ENCODE measurements at regions of chr15 and their contacts with region 1.

Region 1: GRCh38 chr15:99507504-99508310 is 58.1 kb upstream of the MEF2A start:
- DNase-seq: no peak
- ATAC-seq: peak; percentile 49
- H3K4me3 ChIP-seq: no peak overlapping the region; the same call in 1 of the 2 replicates
- H3K27ac ChIP-seq: peak overlapping the region; percentile 74
- H3K4me1 ChIP-seq: peaks cover 88% of the 10 kb centered on the region
- H3K27me3 ChIP-seq: no peaks in the 10 kb centered on the region
- CTCF ChIP-seq: no peak
- EP300 ChIP-seq: peak in 1 of 2 experiments; percentile 59; a peak in 2 of 4 replicates
- POLR2A ChIP-seq: peak; percentile 63
- RAD21 ChIP-seq: no peak

Region 2: GRCh38 chr15:98753726-98754671 is 753.7 kb before region 1 on chr15:
- CTCF ChIA-PET with region 1: no interaction called
- POLR2A ChIA-PET with region 1: no interaction called
- RAD21 ChIA-PET with region 1: no interaction called
- SMC1A ChIA-PET with region 1: no interaction called
- in situ Hi-C with region 1: no loop called
- intact Hi-C with region 1: no loop called
- DNase-seq: no peak
- ATAC-seq: no peak
- H3K4me3 ChIP-seq: no peak overlapping the region
- H3K27ac ChIP-seq: no peak overlapping the region
- H3K4me1 ChIP-seq: no peaks in the 10 kb centered on the region
- H3K27me3 ChIP-seq: no peaks in the 10 kb centered on the region
- CTCF ChIP-seq: no peak
- EP300 ChIP-seq: no peak
- POLR2A ChIP-seq: no peak
- RAD21 ChIP-seq: no peak

Region 3: GRCh38 chr15:99282121-99282520 is 225.6 kb before region 1 on chr15:
- CTCF ChIA-PET with region 1: interaction called, 9 read pairs
- POLR2A ChIA-PET with region 1: no interaction called
- RAD21 ChIA-PET with region 1: interaction called, 9 read pairs
- SMC1A ChIA-PET with region 1: interaction called, 9 read pairs
- in situ Hi-C with region 1: no loop called
- intact Hi-C with region 1: loop called (anchors 1 kb)
- DNase-seq: no peak
- ATAC-seq: no peak; the same call in 1 of the 3 replicates
- H3K4me3 ChIP-seq: no peak overlapping the region
- H3K27ac ChIP-seq: no peak overlapping the region
- H3K4me1 ChIP-seq: no peaks in the 10 kb centered on the region
- H3K27me3 ChIP-seq: no peaks in the 10 kb centered on the region
- CTCF ChIP-seq: no peak
- EP300 ChIP-seq: no peak
- POLR2A ChIP-seq: no peak
- RAD21 ChIP-seq: no peak

Region 4: DNA sequence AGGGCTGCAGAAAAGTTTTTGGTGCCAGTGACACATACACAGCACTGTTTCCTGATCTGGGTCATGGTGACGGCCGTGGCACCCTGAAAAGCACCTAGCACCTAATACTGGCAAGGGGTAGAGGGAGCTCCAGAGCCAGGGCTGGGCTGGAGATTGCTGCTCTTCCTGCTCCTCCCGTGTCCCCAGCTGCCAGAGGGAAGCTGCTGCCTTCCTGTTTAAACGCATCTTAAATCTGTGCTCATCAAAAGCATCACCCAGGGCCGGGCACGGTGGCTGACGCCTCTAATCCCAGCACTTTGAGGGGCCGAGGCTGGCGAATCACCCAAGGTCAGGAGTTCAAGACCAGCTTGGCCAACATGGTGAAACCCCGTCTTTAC is 98.6 kb before region 1 on chr15:
- CTCF ChIA-PET with region 1: interaction called, 7 read pairs
- POLR2A ChIA-PET with region 1: no interaction called
- RAD21 ChIA-PET with region 1: interaction called, 13 read pairs
- SMC1A ChIA-PET with region 1: interaction called, 3 read pairs
- in situ Hi-C with region 1: no loop called
- intact Hi-C with region 1: no loop called
- DNase-seq: no peak
- ATAC-seq: peak; percentile 80
- H3K4me3 ChIP-seq: no peak overlapping the region
- H3K27ac ChIP-seq: no peak overlapping the region
- H3K4me1 ChIP-seq: no peaks in the 10 kb centered on the region
- H3K27me3 ChIP-seq: no peaks in the 10 kb centered on the region; a peak in 1 of 4 replicates
- CTCF ChIP-seq: peak; percentile 33 to 52 (median 45); a peak in 5 of 6 replicates
- EP300 ChIP-seq: no peak
- POLR2A ChIP-seq: no peak
- RAD21 ChIP-seq: peak; percentile 61

Region 5: GRCh38 chr15:99522288-99522687 is 14.6 kb after region 1 on chr15:
- CTCF ChIA-PET with region 1: interaction called, 6 read pairs
- POLR2A ChIA-PET with region 1: no interaction called
- RAD21 ChIA-PET with region 1: interaction called, 3 read pairs
- SMC1A ChIA-PET with region 1: interaction called, 16 read pairs
- in situ Hi-C with region 1: no loop called
- intact Hi-C with region 1: no loop called
- DNase-seq: no peak
- ATAC-seq: peak; percentile 68
- H3K4me3 ChIP-seq: no peak overlapping the region; the same call in 1 of the 2 replicates
- H3K27ac ChIP-seq: no peak overlapping the region
- H3K4me1 ChIP-seq: peaks cover 10% of the 10 kb centered on the region; the same call in 1 of the 2 replicates
- H3K27me3 ChIP-seq: no peaks in the 10 kb centered on the region; a peak in 1 of 4 replicates
- CTCF ChIP-seq: no peak
- EP300 ChIP-seq: no peak
- POLR2A ChIP-seq: no peak
- RAD21 ChIP-seq: no peak

Region 6: DNA sequence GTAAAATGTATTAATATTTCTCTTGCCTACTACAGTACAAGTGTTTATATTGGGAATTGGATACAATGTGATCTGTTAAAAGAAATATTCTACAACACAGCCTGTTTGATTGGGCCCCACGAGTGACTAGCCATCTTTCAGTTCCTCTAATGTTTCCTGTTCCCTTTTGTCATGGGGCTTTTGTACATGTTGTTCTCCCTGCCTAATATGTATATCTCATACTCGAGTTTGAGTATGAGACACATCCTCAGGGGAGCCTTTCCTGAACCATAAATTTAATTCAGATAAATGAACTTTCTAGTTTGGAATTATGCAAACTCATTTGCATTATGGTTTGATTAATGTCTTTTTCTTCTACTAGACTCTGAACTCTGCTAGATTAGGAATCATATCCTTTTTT is 123.5 kb after region 1 on chr15:
- CTCF ChIA-PET with region 1: no interaction called
- POLR2A ChIA-PET with region 1: interaction called, 7 read pairs
- RAD21 ChIA-PET with region 1: interaction called, 4 read pairs
- SMC1A ChIA-PET with region 1: interaction called, 14 read pairs
- in situ Hi-C with region 1: no loop called
- intact Hi-C with region 1: loop called (anchors 2 kb)
- DNase-seq: peak; percentile 74
- ATAC-seq: peak; percentile 98
- H3K4me3 ChIP-seq: peak overlapping the region; percentile 22; the same call in 1 of the 2 replicates
- H3K27ac ChIP-seq: peak overlapping the region; percentile 93
- H3K4me1 ChIP-seq: peaks cover 13% of the 10 kb centered on the region
- H3K27me3 ChIP-seq: no peaks in the 10 kb centered on the region
- CTCF ChIP-seq: no peak
- EP300 ChIP-seq: peak in 1 of 2 experiments; percentile 84; a peak in 1 of 4 replicates
- POLR2A ChIP-seq: no peak
- RAD21 ChIP-seq: peak; percentile 8; the same call in 1 of the 2 replicates

Region 7: DNA sequence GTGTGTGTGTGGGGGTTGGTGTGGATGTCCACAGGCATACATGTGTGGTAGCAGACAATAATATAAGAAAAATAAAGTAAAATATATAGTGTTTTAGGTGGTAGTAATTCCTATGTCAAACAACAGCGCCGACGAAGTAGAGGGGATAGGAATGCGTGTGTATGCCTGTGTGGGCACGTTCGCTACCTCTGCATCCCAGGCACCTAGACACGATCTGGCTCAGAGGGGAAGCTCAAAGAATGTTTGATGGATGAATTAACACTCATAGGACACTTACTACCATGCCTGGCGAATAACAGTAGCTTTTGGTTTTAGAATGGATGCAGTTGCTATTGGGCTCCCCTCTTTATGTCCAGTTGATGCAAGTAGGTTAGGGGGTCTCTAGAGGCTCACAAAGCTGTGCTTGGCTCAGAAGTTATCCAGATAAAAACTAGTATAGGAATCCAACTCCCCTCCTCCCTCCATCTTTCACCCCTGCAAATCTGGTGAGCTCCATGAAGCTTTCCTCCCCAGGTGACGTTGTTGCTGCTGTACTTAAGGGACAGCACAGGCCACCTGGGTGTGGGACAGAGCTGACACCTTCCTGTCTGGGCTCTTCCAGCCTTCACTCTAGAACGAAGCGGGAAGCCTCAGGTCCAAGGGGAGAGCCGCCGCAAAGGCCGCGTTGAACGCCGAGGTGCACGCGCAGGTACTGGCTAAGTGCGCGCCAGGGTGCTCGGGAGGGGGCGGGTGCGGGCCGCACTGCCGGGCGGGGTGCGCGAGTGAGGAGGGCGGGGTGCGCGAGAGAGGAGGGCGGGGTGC is 418.2 kb after region 1 on chr15:
- CTCF ChIA-PET with region 1: no interaction called
- POLR2A ChIA-PET with region 1: no interaction called
- RAD21 ChIA-PET with region 1: no interaction called
- SMC1A ChIA-PET with region 1: no interaction called
- in situ Hi-C with region 1: no loop called
- intact Hi-C with region 1: no loop called
- DNase-seq: no peak
- ATAC-seq: peak; percentile 81
- H3K4me3 ChIP-seq: peak overlapping the region; percentile 94
- H3K27ac ChIP-seq: no peak overlapping the region
- H3K4me1 ChIP-seq: peaks cover 9% of the 10 kb centered on the region
- H3K27me3 ChIP-seq: no peaks in the 10 kb centered on the region; a peak in 1 of 4 replicates
- CTCF ChIP-seq: no peak
- EP300 ChIP-seq: no peak
- POLR2A ChIP-seq: no peak
- RAD21 ChIP-seq: no peak